CD4-positive, alpha-beta T cell (primary cell): ENCODE measurements at regions of chr3 and their contacts with region 1.

Region 1: DNA sequence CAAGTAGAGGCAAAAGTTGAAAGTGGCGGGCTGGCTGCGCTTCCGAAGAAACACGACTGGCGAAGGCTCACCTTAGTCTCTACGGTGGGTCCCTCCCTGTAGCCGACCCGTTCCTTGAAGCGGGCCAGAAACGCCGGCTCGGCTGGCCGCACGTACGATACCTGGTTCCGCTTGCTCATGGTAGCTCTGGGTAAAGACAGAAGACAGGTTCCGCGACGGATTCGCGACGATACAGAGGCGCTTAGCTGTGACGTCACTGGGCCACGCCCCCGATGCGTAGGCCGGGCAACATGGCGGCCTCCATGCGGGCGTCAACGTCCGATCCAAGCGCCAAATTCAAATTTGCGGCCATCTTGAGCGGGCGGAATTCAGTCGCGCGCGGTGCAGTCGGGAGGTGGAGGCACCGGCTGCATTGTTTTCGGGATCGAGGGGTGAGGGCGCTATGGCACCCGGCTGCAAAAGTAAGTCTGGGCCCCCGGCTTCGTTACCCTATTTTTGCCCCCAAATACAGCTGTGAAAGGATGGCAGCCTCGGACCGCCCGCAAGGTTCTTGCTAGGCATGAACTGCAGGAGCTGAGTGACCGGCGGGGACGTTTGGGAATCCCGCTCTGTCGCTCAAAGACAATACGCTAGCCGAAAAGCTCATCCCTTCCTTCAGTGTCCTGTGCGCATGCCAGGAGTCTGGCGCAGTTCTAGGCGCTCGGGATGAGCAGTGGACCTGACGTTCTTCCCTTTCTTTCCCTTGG is at the starts of genes KIAA1143 and KIF15:
- DNase-seq: peak; percentile 92 to 99 (median 96)
- ATAC-seq: peak; percentile 98
- H3K4me3 ChIP-seq: peak within 1 kb of the TSS; percentile 73
- H3K4me3 Mint-ChIP-seq: peak within 1 kb of the TSS; percentile 99
- H3K27ac ChIP-seq: peak within 1 kb of the TSS; percentile 72 to 76
- H3K27ac Mint-ChIP-seq: peak within 1 kb of the TSS; percentile 94
- H3K4me1 ChIP-seq: peaks cover 16% of the 10 kb centered on the region
- H3K4me1 Mint-ChIP-seq: peaks cover 39% of the 10 kb centered on the region
- H3K27me3 ChIP-seq: no peaks in the 10 kb centered on the region
- H3K27me3 Mint-ChIP-seq: no peaks in the 10 kb centered on the region
- CTCF ChIP-seq: no peak
- total RNA-seq, gene KIAA1143: 24.4 to 31.7 TPM
- total RNA-seq, gene KIF15: 0.08 to 0.11 TPM

Region 2: DNA sequence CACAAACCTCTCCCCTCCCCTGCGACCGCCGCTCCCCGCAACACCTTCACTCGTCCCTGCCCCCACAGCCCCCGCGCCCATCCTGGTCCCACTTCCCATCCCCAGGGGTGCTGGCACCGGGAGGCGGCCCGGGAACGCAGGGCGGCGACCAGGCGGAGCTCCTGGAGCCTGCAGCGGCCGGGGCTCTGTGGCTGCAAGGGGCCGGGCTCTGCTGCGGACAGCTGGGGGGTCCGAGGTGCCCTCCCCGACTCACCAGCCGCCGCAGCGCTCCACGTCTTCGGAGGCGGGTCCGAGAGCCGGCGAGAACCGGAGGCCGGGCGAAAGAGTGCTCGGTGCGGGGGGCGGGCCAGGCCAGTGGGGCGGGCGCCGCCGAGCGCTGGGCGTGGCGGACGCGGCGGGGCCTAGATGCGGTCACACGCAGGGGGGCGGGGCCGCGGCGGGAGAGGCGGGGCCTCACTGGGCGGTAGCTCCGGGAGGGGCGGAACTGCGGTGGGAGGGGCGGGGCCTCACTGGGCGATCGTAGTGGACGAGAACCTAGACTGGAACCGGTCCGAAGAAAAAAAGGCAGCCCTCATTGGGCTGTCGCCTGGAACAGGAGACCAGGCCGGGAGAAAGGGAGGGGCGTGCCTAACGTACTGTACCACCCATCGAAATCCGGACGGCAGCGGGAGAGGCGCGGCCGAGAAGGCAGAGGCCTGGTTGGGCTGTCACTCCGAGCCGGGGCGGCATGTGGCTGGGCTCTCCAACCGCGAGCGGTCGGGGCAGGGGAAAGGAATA is 1139.8 kb before region 1 on chr3 and contains the start of gene ANO10:
- CTCF ChIA-PET with region 1: no interaction called
- POLR2A ChIA-PET with region 1: no interaction called
- intact Hi-C with region 1: loop called in 1 of 2 experiments (anchors 5 kb)
- DNase-seq: peak; percentile 87 to 98 (median 93)
- ATAC-seq: peak; percentile 92
- H3K4me3 ChIP-seq: peak within 1 kb of the TSS; percentile 68
- H3K4me3 Mint-ChIP-seq: peak within 1 kb of the TSS; percentile 90
- H3K27ac ChIP-seq: peak within 1 kb of the TSS in 1 of 2 donors; percentile 23
- H3K27ac Mint-ChIP-seq: peak within 1 kb of the TSS; percentile 82
- H3K4me1 ChIP-seq: peaks cover 16% of the 10 kb centered on the region
- H3K4me1 Mint-ChIP-seq: peaks cover 21% of the 10 kb centered on the region
- H3K27me3 ChIP-seq: no peaks in the 10 kb centered on the region
- H3K27me3 Mint-ChIP-seq: no peaks in the 10 kb centered on the region
- CTCF ChIP-seq: no peak
- total RNA-seq, gene ANO10: 6.9 to 8.0 TPM

Region 3: DNA sequence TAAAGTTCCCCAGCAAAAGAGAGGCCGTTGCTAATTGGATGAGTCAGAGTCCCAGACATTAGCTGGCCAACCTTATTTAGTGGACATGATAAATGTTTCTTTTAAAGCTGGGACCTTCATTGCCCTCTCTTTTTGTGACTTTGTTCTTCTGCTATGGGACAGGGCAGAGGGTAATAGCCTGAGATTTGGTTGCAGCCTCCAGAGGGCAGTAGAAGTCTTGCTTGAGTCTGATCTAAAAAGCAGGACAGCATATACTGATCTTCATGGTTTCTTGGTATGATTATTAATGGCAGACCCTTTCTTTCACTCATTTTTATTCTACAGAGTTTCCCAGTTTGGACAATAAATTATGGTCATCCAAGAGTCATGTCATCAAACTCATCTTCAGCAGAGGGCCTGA is 231.7 kb before region 1 on chr3:
- CTCF ChIA-PET with region 1: no interaction called
- POLR2A ChIA-PET with region 1: no interaction called
- intact Hi-C with region 1: no loop called
- DNase-seq: peak in 5 of 14 experiments; percentile 6 to 27 (median 19)
- ATAC-seq: no peak
- H3K4me3 ChIP-seq: no peak overlapping the region
- H3K4me3 Mint-ChIP-seq: no peak overlapping the region
- H3K27ac ChIP-seq: no peak overlapping the region
- H3K27ac Mint-ChIP-seq: no peak overlapping the region
- H3K4me1 ChIP-seq: no peaks in the 10 kb centered on the region
- H3K4me1 Mint-ChIP-seq: no peaks in the 10 kb centered on the region
- H3K27me3 ChIP-seq: peaks cover 4 to 10% of the 10 kb centered on the region in 2 experiments
- H3K27me3 Mint-ChIP-seq: peaks cover 36% of the 10 kb centered on the region
- CTCF ChIP-seq: no peak

Region 4: DNA sequence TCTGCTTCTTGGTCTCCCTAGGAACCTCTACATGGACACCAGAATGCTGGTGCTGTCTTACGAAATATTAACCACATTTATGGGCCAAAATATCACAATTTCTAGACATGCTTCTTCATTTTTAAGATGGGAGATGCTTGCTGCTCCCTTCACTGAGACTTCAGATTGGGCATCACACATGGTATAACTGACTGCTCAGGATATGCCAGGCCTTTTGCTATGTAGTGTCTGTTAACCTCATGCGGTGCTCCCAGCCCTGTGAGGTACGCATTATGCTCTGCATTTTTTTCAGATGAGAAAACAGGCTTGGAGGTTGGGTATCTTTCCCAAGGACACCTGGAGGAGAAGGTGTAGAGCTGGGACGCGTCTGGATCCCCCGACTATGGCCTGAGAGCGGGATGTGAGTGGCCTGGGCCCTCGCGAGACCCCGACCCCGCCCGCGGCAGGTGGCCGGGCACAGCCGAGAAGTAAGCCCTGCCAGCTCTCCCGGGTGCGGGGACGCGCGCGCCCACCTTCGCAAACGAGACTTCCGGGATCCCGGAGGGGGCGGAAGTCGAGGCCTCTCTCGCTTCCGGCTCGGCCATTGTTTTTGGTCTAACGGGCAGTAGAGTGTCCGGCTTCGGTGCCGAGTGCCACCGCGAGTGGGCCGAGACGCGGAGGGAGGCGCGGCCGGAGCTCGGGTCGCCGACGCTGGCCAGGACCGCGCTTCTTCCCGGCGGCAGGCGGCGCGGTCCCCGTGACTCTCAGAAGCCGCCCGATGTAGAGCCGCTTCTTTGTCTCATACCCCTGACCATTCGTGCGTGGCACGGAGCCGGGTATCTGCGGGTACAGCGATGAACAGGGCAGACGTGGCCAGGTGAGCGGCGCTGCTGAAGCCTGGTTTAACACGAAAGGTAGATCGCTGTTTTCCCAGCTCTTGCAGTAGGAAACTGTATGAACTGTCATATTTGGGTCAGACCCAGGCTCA is 206.7 kb before region 1 on chr3 and contains the start of gene ZKSCAN7:
- CTCF ChIA-PET with region 1: no interaction called
- POLR2A ChIA-PET with region 1: interaction called, 3 read pairs
- intact Hi-C with region 1: loop called in 1 of 2 experiments (anchors 10 kb)
- DNase-seq: peak in 13 of 14 experiments; percentile 7 to 59 (median 33)
- ATAC-seq: peak; percentile 54
- H3K4me3 ChIP-seq: peak within 1 kb of the TSS; percentile 65
- H3K4me3 Mint-ChIP-seq: peak within 1 kb of the TSS; percentile 91
- H3K27ac ChIP-seq: no peak within 1 kb of the TSS
- H3K27ac Mint-ChIP-seq: peak within 1 kb of the TSS; percentile 63
- H3K4me1 ChIP-seq: peaks cover 16% of the 10 kb centered on the region
- H3K4me1 Mint-ChIP-seq: peaks cover 27% of the 10 kb centered on the region
- H3K27me3 ChIP-seq: no peaks in the 10 kb centered on the region
- H3K27me3 Mint-ChIP-seq: peaks cover 8% of the 10 kb centered on the region
- CTCF ChIP-seq: no peak
- total RNA-seq, gene ZKSCAN7: 0.20 to 0.49 TPM

Region 5: DNA sequence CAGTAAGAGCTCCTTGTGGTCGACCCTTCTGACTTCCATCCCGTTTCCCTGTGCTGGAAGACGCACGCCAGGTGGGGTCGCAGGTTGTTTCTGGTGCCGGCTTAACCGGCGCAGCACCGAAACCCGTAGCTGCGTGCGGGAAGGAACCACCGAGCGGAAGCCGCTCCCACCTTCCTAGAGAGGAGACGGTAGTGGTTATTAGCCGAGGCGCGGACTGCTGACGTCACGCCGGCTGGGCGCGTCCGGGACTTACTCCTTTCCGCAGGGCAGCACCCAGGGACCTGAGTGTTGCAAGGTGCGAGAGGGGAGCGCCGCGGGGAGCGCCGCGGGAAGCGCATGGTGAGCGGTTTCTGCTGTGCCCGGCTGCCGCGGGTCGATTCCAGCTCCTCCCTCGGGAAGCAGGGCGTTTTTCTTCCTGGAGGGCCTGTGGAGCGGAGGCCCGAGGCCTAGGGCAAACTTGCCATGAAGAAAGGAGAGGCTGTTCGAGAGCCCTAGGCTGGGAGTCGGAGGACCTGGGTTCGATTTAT is 32.1 kb before region 1 on chr3 and contains the start of gene ZNF501:
- CTCF ChIA-PET with region 1: no interaction called
- POLR2A ChIA-PET with region 1: interaction called, 39 read pairs
- intact Hi-C with region 1: loop called (anchors 1 kb)
- DNase-seq: peak; percentile 62 to 91 (median 79)
- ATAC-seq: peak; percentile 96
- H3K4me3 ChIP-seq: peak within 1 kb of the TSS; percentile 81
- H3K4me3 Mint-ChIP-seq: peak within 1 kb of the TSS; percentile 97
- H3K27ac ChIP-seq: no peak within 1 kb of the TSS
- H3K27ac Mint-ChIP-seq: peak within 1 kb of the TSS; percentile 74
- H3K4me1 ChIP-seq: peaks cover 11% of the 10 kb centered on the region
- H3K4me1 Mint-ChIP-seq: peaks cover 18% of the 10 kb centered on the region
- H3K27me3 ChIP-seq: no peaks in the 10 kb centered on the region
- H3K27me3 Mint-ChIP-seq: no peaks in the 10 kb centered on the region
- CTCF ChIP-seq: no peak
- total RNA-seq, gene ZNF501: 0.22 to 0.47 TPM

Region 6: GRCh38 chr3:44795197-44795596 is 33.6 kb after region 1 on chr3:
- CTCF ChIA-PET with region 1: no interaction called
- POLR2A ChIA-PET with region 1: no interaction called
- intact Hi-C with region 1: no loop called
- DNase-seq: no peak
- ATAC-seq: no peak
- H3K4me3 ChIP-seq: no peak overlapping the region
- H3K4me3 Mint-ChIP-seq: no peak overlapping the region
- H3K27ac ChIP-seq: no peak overlapping the region
- H3K27ac Mint-ChIP-seq: no peak overlapping the region
- H3K4me1 ChIP-seq: no peaks in the 10 kb centered on the region
- H3K4me1 Mint-ChIP-seq: no peaks in the 10 kb centered on the region
- H3K27me3 ChIP-seq: no peaks in the 10 kb centered on the region
- H3K27me3 Mint-ChIP-seq: no peaks in the 10 kb centered on the region
- CTCF ChIP-seq: no peak

Region 7: DNA sequence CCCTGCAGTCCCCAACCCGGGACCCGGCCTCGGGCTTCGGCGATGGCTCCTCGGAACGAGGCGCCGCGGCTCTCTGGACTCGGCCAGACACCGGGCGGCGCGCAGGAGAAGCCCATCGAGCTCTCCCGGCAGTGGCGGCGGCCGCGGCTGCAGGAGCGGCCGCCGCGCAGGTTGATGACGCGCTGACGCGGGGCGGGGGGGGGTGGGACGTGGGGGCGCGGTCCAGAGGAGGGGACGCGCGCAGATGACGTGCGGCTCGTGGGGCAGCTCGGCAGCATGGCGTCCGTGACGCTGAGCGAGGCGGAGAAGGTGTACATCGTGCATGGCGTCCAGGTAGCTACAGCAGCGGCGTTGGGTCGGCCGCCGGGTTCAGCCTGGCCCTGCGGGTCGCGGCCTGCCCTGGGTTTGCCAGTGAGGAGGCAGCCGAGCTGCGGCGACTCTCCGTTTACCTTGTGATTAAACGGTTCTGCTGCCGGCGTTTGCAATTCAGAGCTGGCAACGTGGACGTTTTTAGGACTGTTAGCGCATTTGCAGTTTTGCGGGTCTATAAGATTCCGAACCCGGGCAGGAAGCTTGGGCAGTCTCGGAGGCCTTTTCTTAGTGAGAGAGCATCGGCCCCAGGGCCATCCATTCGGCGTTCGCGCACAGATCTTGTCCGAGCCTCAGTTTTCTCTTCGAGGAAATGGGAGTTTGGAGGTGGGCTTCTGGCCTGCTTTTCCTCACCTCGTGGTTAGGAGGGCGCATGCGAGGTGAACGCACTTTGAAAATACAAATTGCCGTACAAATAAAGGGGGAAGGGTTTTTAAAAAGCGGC is 214.6 kb after region 1 on chr3 and contains the starts of genes EXOSC7 and ZDHHC3:
- CTCF ChIA-PET with region 1: no interaction called
- POLR2A ChIA-PET with region 1: interaction called, 13 read pairs
- intact Hi-C with region 1: loop called in 1 of 2 experiments (anchors 2 kb)
- DNase-seq: peak; percentile 77 to 97 (median 84)
- ATAC-seq: peak; percentile 95
- H3K4me3 ChIP-seq: peak within 1 kb of the TSS; percentile 95
- H3K4me3 Mint-ChIP-seq: peak within 1 kb of the TSS; percentile 98
- H3K27ac ChIP-seq: peak within 1 kb of the TSS; percentile 70 to 89
- H3K27ac Mint-ChIP-seq: peak within 1 kb of the TSS; percentile 94
- H3K4me1 ChIP-seq: peaks cover 48% of the 10 kb centered on the region
- H3K4me1 Mint-ChIP-seq: peaks cover 73% of the 10 kb centered on the region
- H3K27me3 ChIP-seq: no peaks in the 10 kb centered on the region
- H3K27me3 Mint-ChIP-seq: no peaks in the 10 kb centered on the region
- CTCF ChIP-seq: no peak
- total RNA-seq, gene EXOSC7: 28.1 to 28.4 TPM
- total RNA-seq, gene ZDHHC3: 34.4 to 34.6 TPM

Region 8: DNA sequence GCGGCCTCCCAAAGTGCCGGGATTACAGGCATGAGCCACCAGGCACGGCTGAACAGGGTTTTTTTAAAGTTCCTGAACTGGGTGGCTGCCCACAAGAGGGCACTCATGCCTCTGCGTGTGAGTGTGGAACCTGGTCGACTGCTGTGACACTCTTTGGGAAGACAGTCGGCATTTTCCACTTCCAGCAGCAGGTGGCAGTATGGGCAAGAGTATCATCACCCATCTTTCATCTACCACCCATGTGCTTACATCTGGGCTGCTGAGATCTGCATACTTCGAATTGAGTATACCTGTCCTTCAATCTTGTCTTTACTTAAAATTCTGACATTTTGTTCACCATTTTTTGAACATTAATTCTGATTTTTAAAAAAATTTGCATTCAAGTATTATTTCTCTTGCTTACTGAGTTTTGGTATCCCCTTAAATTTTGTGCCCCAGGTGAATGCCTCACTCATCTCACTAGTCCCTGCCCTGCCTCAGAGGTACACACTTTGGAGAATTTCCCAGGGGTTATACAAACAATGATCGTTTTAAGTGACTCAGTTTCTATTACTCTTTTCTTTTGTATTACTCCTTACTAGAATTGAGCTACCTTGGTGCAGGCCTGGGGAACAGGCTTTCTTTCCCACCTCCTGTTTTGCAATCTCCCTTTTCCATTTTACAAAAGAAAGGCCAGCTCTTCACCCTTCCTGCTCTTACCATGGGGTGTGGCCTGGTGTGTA is 276.3 kb after region 1 on chr3:
- CTCF ChIA-PET with region 1: no interaction called
- POLR2A ChIA-PET with region 1: no interaction called
- intact Hi-C with region 1: no loop called
- DNase-seq: peak; percentile 86 to 96 (median 90)
- ATAC-seq: peak; percentile 94
- H3K4me3 ChIP-seq: no peak overlapping the region
- H3K4me3 Mint-ChIP-seq: peak overlapping the region; percentile 62
- H3K27ac ChIP-seq: no peak overlapping the region
- H3K27ac Mint-ChIP-seq: no peak overlapping the region
- H3K4me1 ChIP-seq: peaks cover 51% of the 10 kb centered on the region
- H3K4me1 Mint-ChIP-seq: peaks cover 56% of the 10 kb centered on the region
- H3K27me3 ChIP-seq: peaks cover 3 to 8% of the 10 kb centered on the region in 2 experiments
- H3K27me3 Mint-ChIP-seq: peaks cover 49% of the 10 kb centered on the region
- CTCF ChIP-seq: peak; percentile 91